ENCODE measurements at regions of chr12 and their contacts with region 1.

Region 1: GRCh38 chr12:51911788-51912711 is 4.7 kb downstream of the ACVRL1 start:
- DNase-seq: no peak
- H3K4me3 ChIP-seq: no peak overlapping the region
- H3K27ac ChIP-seq: no peak overlapping the region
- H3K4me1 ChIP-seq: peaks cover 0 to 8% (median 1%) of the 10 kb centered on the region in 4 experiments; a peak in 4 of 7 replicates
- H3K27me3 ChIP-seq: peaks cover 4 to 22% (median 14%) of the 10 kb centered on the region in 4 experiments
- CTCF ChIP-seq: no peak
- EP300 ChIP-seq: no peak
- POLR2A ChIP-seq: no peak
- RAD21 ChIP-seq: no peak

Region 2: DNA sequence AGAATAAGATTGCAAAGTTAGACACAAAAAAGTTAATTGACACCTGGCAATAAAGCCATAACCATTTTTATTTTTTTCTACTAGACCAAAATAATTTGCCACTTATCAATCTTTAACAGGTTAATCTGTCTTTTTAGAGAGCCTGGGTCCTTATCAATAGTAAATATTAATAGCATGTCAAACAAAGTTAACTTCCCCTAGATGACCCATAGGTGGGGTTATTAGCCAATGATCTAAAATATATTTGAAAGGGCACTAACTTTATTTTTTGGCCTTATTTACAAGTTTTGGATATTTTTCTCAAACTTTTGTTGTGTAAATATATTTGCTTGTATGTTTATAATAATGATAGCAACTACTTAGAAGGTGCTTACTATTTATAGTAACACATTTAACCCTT is 20.2 kb before region 1 on chr12:
- CTCF ChIA-PET with region 1: interaction called, 77 read pairs
- POLR2A ChIA-PET with region 1: interaction called, 3 read pairs
- DNase-seq: no peak
- H3K4me3 ChIP-seq: no peak overlapping the region
- H3K27ac ChIP-seq: no peak overlapping the region
- H3K4me1 ChIP-seq: peaks cover 0 to 12% (median 5%) of the 10 kb centered on the region in 4 experiments; a peak in 6 of 7 replicates
- H3K27me3 ChIP-seq: peaks cover 0 to 10% (median 6%) of the 10 kb centered on the region in 4 experiments; a peak in 3 of 7 replicates
- CTCF ChIP-seq: peak in 1 of 3 experiments; percentile 13; a peak in 1 of 4 replicates
- EP300 ChIP-seq: no peak
- POLR2A ChIP-seq: no peak
- RAD21 ChIP-seq: peak in 1 of 2 experiments; percentile 16; a peak in 2 of 4 replicates

Region 3: DNA sequence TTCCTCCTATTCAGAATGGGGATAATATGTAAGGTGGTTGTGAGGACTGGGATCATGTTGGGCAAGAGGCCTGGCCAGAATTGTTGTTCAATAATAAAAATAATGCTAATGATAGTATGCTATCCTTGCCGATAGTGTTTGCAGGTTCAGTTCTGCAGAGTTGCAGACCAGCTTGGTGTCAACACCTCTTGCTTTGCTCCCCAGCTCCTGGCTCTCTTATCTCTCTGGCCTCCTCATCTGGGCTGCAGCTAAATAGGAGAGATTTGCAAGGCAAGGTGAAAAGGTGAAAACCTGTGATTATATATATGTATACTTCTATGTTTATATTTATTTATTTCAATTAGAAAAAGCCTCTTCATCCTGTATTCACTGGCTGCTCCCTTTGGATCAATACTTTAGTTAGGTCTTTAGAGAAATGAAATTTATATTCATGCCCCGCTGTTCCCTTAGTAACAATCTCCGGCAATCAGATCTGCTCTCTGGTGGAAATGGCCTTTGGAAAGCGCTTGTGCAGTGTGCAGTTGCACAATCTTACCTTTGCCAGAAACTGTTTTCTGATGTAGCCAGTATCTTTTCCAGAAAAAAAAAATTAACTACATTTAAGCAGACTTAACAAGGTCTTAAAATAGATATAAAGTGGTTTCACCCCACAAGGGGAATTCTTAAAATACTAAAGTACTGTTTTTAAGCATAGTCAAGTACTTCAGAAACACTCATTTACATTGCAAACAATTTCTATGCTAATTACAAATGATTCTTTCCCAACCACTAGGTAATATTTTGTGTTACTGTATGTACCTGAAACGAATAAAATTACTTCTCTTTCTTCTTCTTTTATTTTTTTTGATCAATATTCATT is 20.4 kb after region 1 on chr12:
- CTCF ChIA-PET with region 1: interaction called, 234 read pairs
- POLR2A ChIA-PET with region 1: interaction called, 4 read pairs
- DNase-seq: no peak
- H3K4me3 ChIP-seq: no peak overlapping the region
- H3K27ac ChIP-seq: no peak overlapping the region
- H3K4me1 ChIP-seq: no peaks in the 10 kb centered on the region
- H3K27me3 ChIP-seq: no peaks in the 10 kb centered on the region
- CTCF ChIP-seq: no peak
- EP300 ChIP-seq: no peak
- POLR2A ChIP-seq: no peak
- RAD21 ChIP-seq: no peak

Region 4: GRCh38 chr12:51980051-51980808 is 68.2 kb after region 1 on chr12:
- CTCF ChIA-PET with region 1: interaction called, 10 read pairs
- POLR2A ChIA-PET with region 1: no interaction called
- DNase-seq: peak in 1 of 2 experiments; percentile 66
- H3K4me3 ChIP-seq: no peak overlapping the region
- H3K27ac ChIP-seq: no peak overlapping the region
- H3K4me1 ChIP-seq: peaks cover 0 to 1% (median 0%) of the 10 kb centered on the region in 4 experiments; a peak in 1 of 7 replicates
- H3K27me3 ChIP-seq: no peaks in the 10 kb centered on the region
- CTCF ChIP-seq: peak; percentile 94 to 97 (median 96)
- EP300 ChIP-seq: no peak
- POLR2A ChIP-seq: no peak
- RAD21 ChIP-seq: peak; percentile 83 to 88